Kidney (tissue), 22 donors: ENCODE measurements at regions of chr1 and their contacts with region 1.

Region 1: GRCh38 chr1:15304701-15305467 is 57.9 kb downstream of the FHAD1 start:
- DNase-seq: peak in 4 of 5 donors; percentile 63 to 76 (median 74)
- H3K4me3 ChIP-seq: no peak overlapping the region
- H3K27ac ChIP-seq: no peak overlapping the region
- H3K4me1 ChIP-seq: no peaks in the 10 kb centered on the region
- H3K27me3 ChIP-seq: no peaks in the 10 kb centered on the region
- CTCF ChIP-seq: peak; percentile 92

Region 2: DNA sequence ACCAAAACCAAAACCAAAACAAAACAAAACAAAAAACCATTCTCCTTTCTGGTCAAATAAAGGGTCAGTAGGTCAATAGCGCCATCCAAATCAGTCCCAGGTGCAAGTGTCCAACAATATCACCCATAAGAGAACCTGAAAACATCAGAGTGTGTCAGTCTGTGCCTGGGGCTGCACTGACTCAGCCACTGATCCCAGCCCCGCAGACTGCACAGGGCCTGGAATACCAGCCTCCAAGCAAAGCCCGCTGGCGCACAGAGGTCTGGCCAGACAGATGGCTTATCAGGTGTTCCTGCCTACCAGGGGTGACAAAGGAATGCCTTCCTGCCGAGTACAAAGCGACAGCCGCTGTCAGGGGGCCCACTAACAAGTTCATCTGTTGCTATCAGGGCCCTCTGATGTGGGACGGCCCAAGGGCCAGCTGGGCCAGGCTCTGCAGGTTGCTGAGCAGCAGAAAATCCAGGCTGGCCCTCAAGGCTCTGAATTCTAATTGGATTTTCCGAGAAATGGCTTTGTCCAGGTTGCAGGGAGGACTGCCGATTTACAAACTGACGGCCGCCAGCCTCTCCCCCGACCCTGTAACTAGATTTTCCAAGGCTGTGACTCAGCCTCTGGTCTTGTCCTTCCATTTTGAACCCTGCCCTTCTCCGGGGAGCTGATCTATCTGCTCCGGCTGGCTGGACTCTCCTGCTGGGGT is 165.1 kb before region 1 on chr1:
- intact Hi-C with region 1: loop called (anchors 10 kb)
- DNase-seq: peak; percentile 38 to 77 (median 48)
- H3K4me3 ChIP-seq: no peak overlapping the region
- H3K27ac ChIP-seq: no peak overlapping the region
- H3K4me1 ChIP-seq: no peaks in the 10 kb centered on the region
- H3K27me3 ChIP-seq: no peaks in the 10 kb centered on the region
- CTCF ChIP-seq: no peak

Region 3: DNA sequence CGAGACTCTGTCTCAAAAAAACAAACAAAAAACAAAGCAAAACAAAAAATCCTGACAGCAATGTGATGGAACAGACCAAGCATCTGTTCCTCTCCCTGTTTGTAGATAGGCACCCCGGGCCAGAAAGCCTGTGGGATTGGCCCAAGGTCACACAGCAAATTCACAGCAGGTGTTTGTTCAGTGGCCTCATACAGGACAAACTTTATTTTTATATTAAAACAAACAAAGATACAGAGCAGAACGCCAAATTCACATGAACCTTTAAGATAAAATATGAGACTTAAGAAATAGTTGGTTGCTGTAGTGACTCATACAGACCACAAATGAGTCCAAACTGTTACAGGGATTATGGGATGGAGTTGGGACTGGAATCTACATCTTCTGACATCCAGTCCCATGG is 149.4 kb after region 1 on chr1:
- intact Hi-C with region 1: no loop called
- DNase-seq: no peak
- H3K4me3 ChIP-seq: no peak overlapping the region
- H3K27ac ChIP-seq: no peak overlapping the region
- H3K4me1 ChIP-seq: no peaks in the 10 kb centered on the region
- H3K27me3 ChIP-seq: no peaks in the 10 kb centered on the region
- CTCF ChIP-seq: no peak